ENCODE measurements at regions of chr14 and their contacts with region 1.

Region 1: GRCh38 chr14:29016050-29016900 is 249.7 kb downstream of the FOXG1 start:
- DNase-seq: peak; percentile 66
- ATAC-seq: peak; percentile 70
- H3K4me3 ChIP-seq: no peak overlapping the region
- H3K27ac ChIP-seq: no peak overlapping the region
- H3K4me1 ChIP-seq: no peaks in the 10 kb centered on the region
- H3K27me3 ChIP-seq: no peaks in the 10 kb centered on the region; the same call in 1 of the 2 replicates
- CTCF ChIP-seq: peak; percentile 96

Region 2: DNA sequence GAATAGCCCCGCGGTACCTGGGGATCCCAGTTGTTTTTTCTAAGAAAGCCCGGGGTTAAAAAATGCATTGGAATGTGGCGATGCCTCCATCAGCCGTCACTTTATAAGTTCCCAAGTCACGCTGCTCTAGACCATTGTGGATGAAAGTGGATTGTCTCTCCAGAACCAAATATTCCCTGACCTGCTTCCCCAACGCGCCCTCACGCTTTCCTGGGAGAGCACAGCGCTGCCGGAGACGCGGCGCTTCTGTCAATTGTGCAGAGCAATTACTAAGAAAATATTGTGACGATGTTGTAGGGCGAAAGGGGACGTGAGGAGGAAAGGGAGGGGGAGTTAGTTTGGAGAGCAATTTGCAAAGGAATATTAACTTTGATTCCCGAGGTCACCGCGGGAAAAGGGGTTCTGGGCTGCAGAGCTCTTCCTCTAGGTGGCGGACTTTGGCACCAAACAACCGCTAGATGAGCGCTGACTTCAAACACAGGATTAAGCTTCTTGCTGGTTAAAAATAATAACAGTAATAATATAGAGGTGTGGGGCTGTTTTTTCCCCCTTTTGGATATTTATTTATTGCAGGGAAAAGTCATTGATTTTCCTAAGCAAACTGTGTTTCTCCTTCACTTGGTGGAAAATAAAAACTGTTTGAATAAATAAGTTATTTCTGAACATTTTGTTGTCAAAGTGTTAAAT is 259.2 kb before region 1 on chr14:
- CTCF ChIA-PET with region 1: no interaction called
- POLR2A ChIA-PET with region 1: no interaction called
- intact Hi-C with region 1: loop called (anchors 5 kb)
- DNase-seq: peak; percentile 63
- ATAC-seq: peak; percentile 70
- H3K4me3 ChIP-seq: peak overlapping the region; percentile 42
- H3K27ac ChIP-seq: no peak overlapping the region
- H3K4me1 ChIP-seq: peaks cover 4% of the 10 kb centered on the region; the same call in 1 of the 2 replicates
- H3K27me3 ChIP-seq: peaks cover 75% of the 10 kb centered on the region
- CTCF ChIP-seq: peak; percentile 88

Region 3: GRCh38 chr14:28911521-28911920 is 104.8 kb before region 1 on chr14:
- CTCF ChIA-PET with region 1: no interaction called
- POLR2A ChIA-PET with region 1: no interaction called
- intact Hi-C with region 1: no loop called
- DNase-seq: no peak
- ATAC-seq: no peak
- H3K4me3 ChIP-seq: no peak overlapping the region
- H3K27ac ChIP-seq: no peak overlapping the region
- H3K4me1 ChIP-seq: no peaks in the 10 kb centered on the region
- H3K27me3 ChIP-seq: peaks cover 44% of the 10 kb centered on the region; the same call in 1 of the 2 replicates
- CTCF ChIP-seq: no peak

Region 4: GRCh38 chr14:29111554-29111953 is 95.3 kb after region 1 on chr14:
- CTCF ChIA-PET with region 1: no interaction called
- POLR2A ChIA-PET with region 1: no interaction called
- intact Hi-C with region 1: no loop called
- DNase-seq: no peak
- ATAC-seq: no peak
- H3K4me3 ChIP-seq: no peak overlapping the region
- H3K27ac ChIP-seq: no peak overlapping the region
- H3K4me1 ChIP-seq: no peaks in the 10 kb centered on the region
- H3K27me3 ChIP-seq: 0 out of 2 replicates have a peak, but pooled peaks cover 3% of the 10 kb centered on the region
- CTCF ChIP-seq: no peak

Region 5: DNA sequence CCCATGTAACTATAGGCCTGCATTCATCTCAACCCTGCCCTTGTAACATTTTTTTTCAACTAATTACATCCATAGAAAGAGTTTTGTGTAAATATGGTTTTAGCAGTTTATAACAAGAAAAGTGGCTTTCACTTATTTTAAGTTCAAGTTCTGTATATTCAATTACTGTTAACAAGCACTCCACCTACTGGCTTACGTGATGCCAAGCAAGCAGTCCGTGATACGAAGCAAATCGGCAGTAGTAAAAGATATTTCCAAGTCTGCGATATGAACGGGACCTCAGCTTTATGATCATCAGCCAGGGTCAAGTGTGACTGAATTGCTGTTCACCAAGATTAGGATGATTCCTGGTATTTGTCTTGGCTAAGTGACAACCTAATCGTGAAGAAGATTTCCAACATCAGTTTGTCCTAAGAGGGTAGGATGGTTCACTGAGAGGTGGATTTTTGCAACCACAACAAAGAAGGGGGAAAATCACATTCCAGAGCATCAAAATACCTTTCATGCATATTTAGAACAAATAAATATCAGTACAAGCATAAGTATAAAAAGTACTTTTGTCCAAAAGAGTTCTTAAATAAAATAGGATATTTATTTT is 206.5 kb after region 1 on chr14:
- CTCF ChIA-PET with region 1: no interaction called
- POLR2A ChIA-PET with region 1: no interaction called
- intact Hi-C with region 1: loop called (anchors 1 kb)
- DNase-seq: peak; percentile 59
- ATAC-seq: peak; percentile 95
- H3K4me3 ChIP-seq: no peak overlapping the region
- H3K27ac ChIP-seq: no peak overlapping the region
- H3K4me1 ChIP-seq: peaks cover 1% of the 10 kb centered on the region
- H3K27me3 ChIP-seq: peaks cover 17% of the 10 kb centered on the region
- CTCF ChIP-seq: peak; percentile 88

Region 6: DNA sequence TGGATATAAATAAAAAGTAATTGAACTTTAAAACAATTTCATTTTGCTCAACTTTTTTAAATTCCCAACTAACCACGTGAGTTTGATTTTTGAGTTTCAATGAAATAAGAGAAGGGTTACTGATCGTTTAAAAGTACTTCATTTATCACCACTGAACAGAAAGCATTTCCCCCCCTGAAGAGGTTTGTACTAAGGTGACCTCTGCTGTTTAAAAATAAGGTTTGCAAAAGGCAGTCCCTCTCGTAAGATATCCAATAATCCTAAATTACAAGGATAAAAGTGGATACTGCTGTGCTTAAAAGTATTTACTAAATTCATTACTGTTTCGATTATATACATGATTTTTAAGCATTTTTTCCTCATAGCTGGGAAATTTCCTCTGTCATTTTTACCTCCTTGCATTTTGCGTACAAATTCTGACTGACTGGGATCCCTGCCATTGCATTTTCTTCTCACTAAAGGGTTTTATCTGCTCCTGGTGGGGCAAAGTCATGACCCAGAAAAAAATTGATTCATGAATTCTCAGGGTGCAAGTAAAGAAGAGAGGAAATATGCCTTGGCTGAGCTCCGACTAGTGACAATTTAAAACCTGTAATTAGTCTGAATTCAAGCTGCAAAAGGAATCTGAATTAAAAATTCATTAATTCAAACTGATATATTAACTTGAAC is 447.6 kb after region 1 on chr14:
- CTCF ChIA-PET with region 1: no interaction called
- POLR2A ChIA-PET with region 1: no interaction called
- intact Hi-C with region 1: loop called (anchors 5 kb)
- DNase-seq: peak; percentile 29
- ATAC-seq: peak; percentile 64
- H3K4me3 ChIP-seq: no peak overlapping the region
- H3K27ac ChIP-seq: no peak overlapping the region
- H3K4me1 ChIP-seq: peaks cover 1% of the 10 kb centered on the region
- H3K27me3 ChIP-seq: peaks cover 30% of the 10 kb centered on the region; the same call in 1 of the 2 replicates
- CTCF ChIP-seq: peak; percentile 52

Region 7: GRCh38 chr14:29518335-29518734 is 502.1 kb after region 1 on chr14:
- CTCF ChIA-PET with region 1: no interaction called
- POLR2A ChIA-PET with region 1: no interaction called
- intact Hi-C with region 1: loop called (anchors 1 kb)
- DNase-seq: peak; percentile 39
- ATAC-seq: no peak
- H3K4me3 ChIP-seq: no peak overlapping the region
- H3K27ac ChIP-seq: no peak overlapping the region
- H3K4me1 ChIP-seq: no peaks in the 10 kb centered on the region
- H3K27me3 ChIP-seq: peaks cover 21% of the 10 kb centered on the region
- CTCF ChIP-seq: peak; percentile 53

Region 8: DNA sequence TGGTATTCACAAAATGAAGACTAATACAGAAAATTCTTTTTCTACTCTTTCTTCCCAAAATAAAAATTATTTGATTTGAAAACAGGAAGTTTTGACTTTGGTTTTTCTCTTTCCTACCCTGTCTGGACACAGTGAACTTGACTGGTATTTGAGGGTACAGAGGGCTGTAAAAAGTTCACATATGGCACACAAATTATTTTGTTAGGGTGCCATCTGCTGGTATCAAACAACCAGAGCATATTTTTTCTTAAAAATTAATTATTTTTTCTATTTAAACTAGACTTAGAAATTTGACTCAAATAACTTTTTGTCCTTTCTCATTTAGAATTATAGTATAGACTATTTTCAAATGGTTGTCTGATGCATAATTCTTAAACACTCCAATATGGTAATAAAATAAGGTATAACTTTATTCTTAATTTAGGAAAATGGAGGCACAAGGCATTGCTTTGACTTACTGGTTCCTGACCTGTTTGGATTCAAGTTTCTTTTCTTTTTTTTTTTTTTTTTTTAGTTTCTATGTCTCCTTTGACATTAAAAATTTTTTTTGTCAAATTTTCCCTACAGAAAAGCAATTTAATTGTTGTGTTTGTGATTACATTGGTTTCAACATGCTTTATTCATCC is 520.7 kb after region 1 on chr14:
- CTCF ChIA-PET with region 1: no interaction called
- POLR2A ChIA-PET with region 1: no interaction called
- intact Hi-C with region 1: loop called (anchors 1 kb)
- DNase-seq: peak; percentile 35
- ATAC-seq: no peak
- H3K4me3 ChIP-seq: no peak overlapping the region
- H3K27ac ChIP-seq: no peak overlapping the region
- H3K4me1 ChIP-seq: no peaks in the 10 kb centered on the region
- H3K27me3 ChIP-seq: peaks cover 35% of the 10 kb centered on the region
- CTCF ChIP-seq: peak; percentile 60